ENCODE measurements at regions of chr10 and their contacts with region 1.

Region 1: GRCh38 chr10:69800109-69800508 is 1.6 kb upstream of the COL13A1 start:
- DNase-seq: no peak
- ATAC-seq: peak; percentile 73
- H3K4me3 ChIP-seq: no peak overlapping the region
- H3K27ac ChIP-seq: no peak overlapping the region
- H3K4me1 ChIP-seq: peaks cover 9% of the 10 kb centered on the region
- H3K27me3 ChIP-seq: peaks cover 7% of the 10 kb centered on the region
- CTCF ChIP-seq: peak; percentile 92

Region 2: DNA sequence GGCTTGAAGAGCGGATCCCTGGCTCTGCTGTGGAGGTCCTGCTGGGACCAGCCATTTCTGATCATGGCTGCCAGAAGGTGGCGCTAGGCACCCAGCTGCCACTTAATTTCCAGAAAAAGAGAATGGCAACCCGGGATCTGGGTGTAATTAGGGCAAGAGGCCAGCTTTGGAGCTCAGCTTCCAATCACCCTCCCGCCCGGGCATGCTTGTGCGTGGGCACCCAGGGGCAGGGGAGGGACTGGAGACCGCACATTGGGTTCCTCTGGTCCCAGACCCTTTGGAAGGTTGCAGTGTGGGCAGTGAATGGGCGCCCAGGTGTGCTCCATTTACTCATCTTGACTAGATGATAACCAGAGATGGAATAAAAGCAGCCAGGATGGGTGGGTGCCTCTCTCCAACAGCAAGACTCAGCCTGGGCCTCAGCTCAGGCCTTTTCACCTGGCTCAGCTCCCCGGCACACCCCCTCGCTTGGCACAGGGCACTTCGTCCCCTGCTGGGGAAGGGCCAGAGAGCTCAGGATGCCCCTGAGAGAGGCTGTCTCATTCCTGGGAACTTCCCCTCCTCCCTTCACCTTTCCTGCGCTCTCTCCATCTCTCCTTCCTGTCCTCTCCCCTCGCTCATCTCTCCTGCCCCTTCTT is 155.3 kb before region 1 on chr10:
- CTCF ChIA-PET with region 1: interaction called, 4 read pairs
- POLR2A ChIA-PET with region 1: no interaction called
- in situ Hi-C with region 1: no loop called
- intact Hi-C with region 1: loop called (anchors 2 kb)
- DNase-seq: no peak
- ATAC-seq: peak; percentile 87
- H3K4me3 ChIP-seq: no peak overlapping the region
- H3K27ac ChIP-seq: no peak overlapping the region
- H3K4me1 ChIP-seq: no peaks in the 10 kb centered on the region
- H3K27me3 ChIP-seq: no peaks in the 10 kb centered on the region
- CTCF ChIP-seq: peak; percentile 99

Region 3: GRCh38 chr10:69742928-69743602 is 57.0 kb before region 1 on chr10:
- CTCF ChIA-PET with region 1: interaction called, 6 read pairs
- POLR2A ChIA-PET with region 1: no interaction called
- in situ Hi-C with region 1: no loop called
- intact Hi-C with region 1: loop called (anchors 2 kb)
- DNase-seq: no peak
- ATAC-seq: peak; percentile 75
- H3K4me3 ChIP-seq: no peak overlapping the region
- H3K27ac ChIP-seq: no peak overlapping the region
- H3K4me1 ChIP-seq: no peaks in the 10 kb centered on the region
- H3K27me3 ChIP-seq: 0 out of 2 replicates have a peak, but pooled peaks cover 6% of the 10 kb centered on the region
- CTCF ChIP-seq: no peak; the same call in 1 of the 2 replicates

Region 4: DNA sequence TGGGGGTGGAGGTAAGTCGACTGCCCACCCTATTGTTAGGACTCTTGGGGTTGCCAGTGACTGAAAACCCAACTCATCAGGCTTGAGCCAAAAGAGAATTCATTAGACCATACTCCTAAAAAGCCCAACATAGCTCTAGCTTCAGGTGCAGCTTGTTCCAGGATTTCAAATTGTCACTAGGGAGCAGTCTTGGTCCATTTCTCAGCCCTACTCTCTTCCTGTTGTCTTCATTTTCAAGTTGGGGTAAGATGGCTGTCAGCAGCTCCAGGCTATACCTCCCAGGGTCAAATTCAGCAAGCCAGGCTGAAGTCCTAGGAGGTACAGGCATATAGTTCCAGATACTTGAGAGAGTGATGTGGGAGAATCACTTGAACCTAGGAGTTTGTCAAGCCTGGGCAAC is 13.3 kb before region 1 on chr10:
- CTCF ChIA-PET with region 1: interaction called, 12 read pairs
- POLR2A ChIA-PET with region 1: no interaction called
- in situ Hi-C with region 1: no loop called
- intact Hi-C with region 1: no loop called
- DNase-seq: no peak
- ATAC-seq: peak; percentile 77
- H3K4me3 ChIP-seq: no peak overlapping the region
- H3K27ac ChIP-seq: no peak overlapping the region
- H3K4me1 ChIP-seq: no peaks in the 10 kb centered on the region
- H3K27me3 ChIP-seq: peaks cover 4% of the 10 kb centered on the region
- CTCF ChIP-seq: peak; percentile 61

Measured in Panc1 (cell line).